Sigmoid colon (tissue), 7 donors: ENCODE measurements at regions of chr2 and their contacts with region 1.

Region 1: GRCh38 chr2:2664989-2665835 is 334.1 kb upstream of the MYT1L start:
- DNase-seq: peak; percentile 60
- H3K4me3 ChIP-seq: no peak overlapping the region
- H3K27ac ChIP-seq: no peak overlapping the region
- H3K4me1 ChIP-seq: peaks cover 0 to 25% (median 17%) of the 10 kb centered on the region in 4 donors
- H3K27me3 ChIP-seq: no peaks in the 10 kb centered on the region
- CTCF ChIP-seq: no peak
- EP300 ChIP-seq: no peak
- POLR2A ChIP-seq: no peak

Region 2: GRCh38 chr2:2806711-2807110 is 141.5 kb after region 1 on chr2:
- intact Hi-C with region 1: no loop called
- DNase-seq: no peak
- H3K4me3 ChIP-seq: no peak overlapping the region
- H3K27ac ChIP-seq: no peak overlapping the region
- H3K4me1 ChIP-seq: no peaks in the 10 kb centered on the region
- H3K27me3 ChIP-seq: no peaks in the 10 kb centered on the region
- CTCF ChIP-seq: no peak
- EP300 ChIP-seq: no peak
- POLR2A ChIP-seq: no peak

Region 3: DNA sequence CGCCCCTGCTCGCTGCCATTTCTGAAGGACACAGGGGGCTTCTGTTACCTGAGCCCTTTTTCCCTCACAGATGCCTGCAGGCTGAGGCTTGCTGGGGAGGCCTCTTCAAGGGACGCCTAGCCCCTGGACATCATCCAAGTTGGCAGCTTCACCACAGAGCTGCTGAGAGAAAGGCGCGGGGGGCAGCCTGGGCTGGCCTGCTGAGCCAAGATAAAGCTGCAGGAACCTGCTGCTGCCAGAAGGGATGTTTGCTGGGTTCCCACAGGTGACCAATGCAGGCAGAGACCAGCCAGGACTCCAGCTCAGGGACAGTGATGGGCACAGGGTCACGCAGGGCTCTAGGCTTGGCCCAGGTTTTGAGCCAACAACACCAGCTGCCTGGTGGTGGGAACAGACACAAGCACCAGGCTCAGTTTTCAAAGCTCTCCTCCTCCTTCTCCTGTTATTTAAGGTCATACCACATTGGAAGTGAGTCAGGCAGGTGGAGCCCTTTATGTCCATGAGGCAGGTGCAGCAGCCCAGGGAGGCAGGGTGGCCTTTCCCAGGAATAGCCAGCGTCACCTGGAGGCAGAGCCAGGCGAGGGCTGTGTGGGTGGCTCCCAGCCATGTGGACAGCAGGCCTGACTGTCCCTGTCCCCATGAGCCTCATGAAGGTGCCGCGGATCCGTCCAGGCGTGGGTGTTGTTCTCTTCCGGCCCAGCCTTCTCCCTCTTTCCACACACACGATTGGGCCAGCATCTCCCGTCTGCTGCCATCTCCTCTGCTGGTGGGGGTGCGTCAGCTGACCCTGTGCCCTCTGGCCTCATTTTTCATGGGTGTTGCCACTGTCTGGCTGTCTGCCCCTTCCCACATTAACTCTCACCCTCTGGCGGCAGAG is 181.4 kb after region 1 on chr2:
- intact Hi-C with region 1: loop called (anchors 10 kb)
- DNase-seq: peak; percentile 76
- H3K4me3 ChIP-seq: no peak overlapping the region
- H3K27ac ChIP-seq: no peak overlapping the region
- H3K4me1 ChIP-seq: peaks cover 0 to 11% (median 8%) of the 10 kb centered on the region in 4 donors
- H3K27me3 ChIP-seq: no peaks in the 10 kb centered on the region
- CTCF ChIP-seq: no peak
- EP300 ChIP-seq: no peak
- POLR2A ChIP-seq: no peak